ENCODE measurements at regions of chr12 and their contacts with region 1.

Region 1: DNA sequence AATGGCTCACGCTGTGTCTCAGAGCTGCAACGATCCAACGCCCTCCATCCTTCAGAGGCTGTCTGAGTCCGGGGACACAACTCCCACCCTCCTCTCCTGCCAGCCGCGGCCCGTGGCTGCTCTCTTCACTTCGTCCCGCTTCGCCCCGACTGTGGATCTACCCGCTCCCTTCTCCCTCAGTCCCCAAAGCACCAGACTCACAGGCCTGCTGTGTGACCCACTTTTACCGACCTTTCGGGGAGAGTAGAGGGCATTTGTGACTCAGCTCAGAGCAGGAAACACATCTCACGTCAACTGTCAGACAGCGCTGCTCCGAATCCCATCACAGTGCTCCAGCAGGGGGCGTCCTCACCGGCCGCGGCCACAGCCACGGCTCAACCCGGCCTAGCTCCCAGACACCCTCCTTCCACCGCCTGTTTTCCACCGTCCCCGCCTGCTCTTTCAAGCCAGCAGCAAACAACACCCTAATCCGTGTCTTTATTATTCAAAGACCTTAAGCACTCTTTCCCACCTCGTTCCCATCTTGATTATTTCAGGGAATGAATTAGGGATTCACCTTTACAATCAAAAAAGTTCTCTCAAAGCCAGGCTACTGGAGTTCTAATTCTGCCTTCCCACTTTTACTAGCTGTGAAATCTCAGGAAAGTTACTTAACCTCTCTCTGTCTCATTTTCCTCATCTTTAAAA is 5.0 kb upstream of the AQP2 start:
- DNase-seq: peak; percentile 54 to 80 (median 68)
- H3K4me3 ChIP-seq: peak overlapping the region; percentile 39
- H3K4me3 Mint-ChIP-seq: peak overlapping the region; percentile 41 to 86 (median 80)
- H3K27ac ChIP-seq: no peak overlapping the region
- H3K27ac Mint-ChIP-seq: peak overlapping the region in 6 of 8 donors; percentile 48 to 94 (median 85)
- H3K4me1 ChIP-seq: peaks cover 9% of the 10 kb centered on the region
- H3K4me1 Mint-ChIP-seq: peaks cover 11 to 21% (median 16%) of the 10 kb centered on the region in 3 donors
- H3K27me3 ChIP-seq: no peaks in the 10 kb centered on the region
- H3K27me3 Mint-ChIP-seq: peaks cover 4 to 22% of the 10 kb centered on the region in 2 donors

Region 2: GRCh38 chr12:49932533-49933130 is 12.9 kb before region 1 on chr12:
- CTCF ChIA-PET with region 1: interaction called, 10 read pairs
- POLR2A ChIA-PET with region 1: no interaction called
- DNase-seq: no peak
- H3K4me3 ChIP-seq: no peak overlapping the region
- H3K4me3 Mint-ChIP-seq: no peak overlapping the region
- H3K27ac ChIP-seq: no peak overlapping the region
- H3K27ac Mint-ChIP-seq: no peak overlapping the region
- H3K4me1 ChIP-seq: no peaks in the 10 kb centered on the region
- H3K4me1 Mint-ChIP-seq: no peaks in the 10 kb centered on the region
- H3K27me3 ChIP-seq: no peaks in the 10 kb centered on the region
- H3K27me3 Mint-ChIP-seq: peaks cover 4 to 29% of the 10 kb centered on the region in 2 donors

Region 3: DNA sequence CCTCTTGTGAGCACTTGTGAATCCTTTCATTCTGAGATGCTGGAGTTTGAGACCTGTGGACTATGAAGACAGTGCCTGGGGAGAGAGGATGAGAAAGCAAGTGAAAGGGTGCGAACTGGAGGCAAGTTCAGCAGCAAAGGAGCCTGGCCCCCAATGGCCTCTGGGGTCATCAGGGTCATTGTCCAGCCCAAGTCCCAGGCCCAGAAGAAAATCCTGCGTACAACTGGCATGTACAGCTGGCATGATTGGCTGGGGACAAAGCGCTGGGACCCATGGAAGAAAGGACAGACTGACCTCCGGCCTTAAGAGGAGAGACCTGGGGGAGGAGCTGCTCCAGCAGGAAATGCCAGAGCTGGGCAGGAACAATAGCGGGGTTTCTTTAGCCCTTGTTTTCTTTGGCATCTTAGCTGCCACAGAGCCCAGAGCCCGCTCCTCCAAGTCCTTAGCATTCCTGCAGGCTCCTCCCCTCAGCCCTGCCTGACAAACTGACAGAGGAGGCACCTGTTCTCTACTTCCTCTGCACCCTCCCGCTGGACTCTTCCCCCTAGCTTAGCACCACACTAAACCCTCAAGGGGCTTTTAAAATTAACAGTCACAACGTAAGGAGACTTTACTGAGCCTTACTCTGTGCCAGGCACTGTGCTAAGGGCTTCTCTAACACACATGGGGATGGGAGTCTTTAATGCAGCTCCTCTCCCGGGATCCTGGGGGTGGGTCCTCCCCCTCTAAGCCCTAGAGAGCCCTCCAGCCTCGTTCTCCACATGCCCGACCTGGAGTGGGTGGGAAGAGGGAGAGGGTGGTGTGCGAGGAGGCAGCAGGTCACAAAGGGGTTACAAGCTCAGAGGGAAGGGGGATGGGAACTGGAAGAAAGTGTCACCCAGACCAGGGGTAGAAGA is 14.3 kb after region 1 on chr12:
- CTCF ChIA-PET with region 1: interaction called, 22 read pairs
- POLR2A ChIA-PET with region 1: no interaction called
- DNase-seq: no peak
- H3K4me3 ChIP-seq: no peak overlapping the region
- H3K4me3 Mint-ChIP-seq: peak overlapping the region; percentile 46 to 72 (median 58)
- H3K27ac ChIP-seq: no peak overlapping the region
- H3K27ac Mint-ChIP-seq: no peak overlapping the region
- H3K4me1 ChIP-seq: no peaks in the 10 kb centered on the region
- H3K4me1 Mint-ChIP-seq: peaks cover 5 to 10% (median 8%) of the 10 kb centered on the region in 3 donors
- H3K27me3 ChIP-seq: peaks cover 54% of the 10 kb centered on the region
- H3K27me3 Mint-ChIP-seq: peaks cover 44 to 79% of the 10 kb centered on the region in 2 donors

Region 4: DNA sequence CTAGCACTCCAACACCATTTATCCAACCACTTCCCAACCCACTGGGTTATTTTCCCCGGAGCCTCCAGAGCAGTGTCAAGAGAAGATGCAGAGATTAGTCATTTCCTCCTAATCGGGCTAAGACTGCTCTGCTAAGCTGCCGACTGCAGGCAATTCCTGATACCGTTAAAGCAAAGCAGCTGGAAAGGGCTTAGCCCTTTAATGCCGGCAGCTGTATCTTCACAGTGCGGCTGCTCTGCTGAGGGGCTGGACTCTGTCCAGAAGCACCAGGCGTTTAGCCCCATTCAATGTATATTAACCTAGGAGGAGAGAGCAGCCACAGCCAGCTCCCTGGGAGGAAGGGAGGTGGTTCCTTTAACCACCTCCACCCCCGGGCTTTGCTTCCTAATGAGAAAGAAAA is 38.4 kb after region 1 on chr12:
- CTCF ChIA-PET with region 1: interaction called, 10 read pairs
- POLR2A ChIA-PET with region 1: no interaction called
- DNase-seq: no peak
- H3K4me3 ChIP-seq: no peak overlapping the region
- H3K4me3 Mint-ChIP-seq: no peak overlapping the region
- H3K27ac ChIP-seq: no peak overlapping the region
- H3K27ac Mint-ChIP-seq: peak overlapping the region in 1 of 8 donors; percentile 13
- H3K4me1 ChIP-seq: no peaks in the 10 kb centered on the region
- H3K4me1 Mint-ChIP-seq: no peaks in the 10 kb centered on the region
- H3K27me3 ChIP-seq: no peaks in the 10 kb centered on the region
- H3K27me3 Mint-ChIP-seq: no peaks in the 10 kb centered on the region

Measured in CD8-positive, alpha-beta memory T cell (primary cell).